GM12878 (cell line): ENCODE measurements at regions of chr19 and their contacts with region 1.

Region 1: DNA sequence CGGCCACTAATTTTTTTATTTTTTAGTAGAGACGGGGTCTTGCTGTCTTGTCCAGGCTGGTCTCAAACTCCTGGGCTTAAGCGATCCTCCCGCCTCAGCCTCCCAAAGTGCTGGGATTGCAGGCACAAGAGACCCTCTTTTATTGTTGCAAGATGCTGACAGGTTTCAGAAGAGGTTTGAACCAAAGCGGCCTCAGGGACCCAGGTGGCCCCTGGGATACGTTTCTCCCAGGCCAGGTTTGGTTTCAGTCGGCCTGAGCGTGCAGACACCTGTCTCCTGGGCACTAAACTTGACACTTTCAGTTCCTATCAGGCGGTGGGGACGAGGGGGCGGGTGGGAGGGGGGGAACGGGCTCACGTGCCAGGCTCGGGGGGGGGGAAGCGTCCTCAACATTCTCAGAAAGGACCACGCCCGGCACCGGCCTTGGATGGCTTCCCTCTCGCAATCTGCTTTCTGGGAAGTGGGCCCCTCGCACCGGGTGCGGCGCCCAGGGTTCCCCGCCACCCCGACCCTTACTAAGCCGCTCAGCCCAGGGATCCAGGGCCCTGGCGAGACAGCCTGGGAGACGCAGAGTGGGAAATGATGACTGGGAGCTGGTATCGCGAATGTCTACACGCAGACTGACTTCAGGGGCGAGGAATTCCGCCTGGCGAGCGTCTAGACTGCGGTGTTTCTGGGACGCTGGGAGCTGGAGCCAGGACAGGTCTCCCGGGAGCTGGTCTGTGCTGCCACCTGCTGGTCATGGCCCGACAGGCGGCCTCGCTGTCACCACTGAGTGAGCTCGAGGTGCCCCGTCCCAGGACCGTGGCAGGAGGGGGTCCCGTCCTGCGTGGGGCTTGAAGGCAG is 91.6 kb downstream of the GNG7 start:
- DNase-seq: peak; percentile 91
- ATAC-seq: peak; percentile 58
- H3K4me3 ChIP-seq: peak overlapping the region; percentile 72; the same call in 1 of the 2 replicates
- H3K27ac ChIP-seq: peak overlapping the region; percentile 96
- H3K4me1 ChIP-seq: peaks cover 46% of the 10 kb centered on the region
- H3K27me3 ChIP-seq: no peaks in the 10 kb centered on the region
- CTCF ChIP-seq: peak; percentile 93 to 97 (median 94); a peak in 5 of 6 replicates
- EP300 ChIP-seq: peak; percentile 68 to 90; a peak in 3 of 4 replicates
- POLR2A ChIP-seq: no peak; the same call in 1 of the 2 replicates
- RAD21 ChIP-seq: peak; percentile 91

Region 2: DNA sequence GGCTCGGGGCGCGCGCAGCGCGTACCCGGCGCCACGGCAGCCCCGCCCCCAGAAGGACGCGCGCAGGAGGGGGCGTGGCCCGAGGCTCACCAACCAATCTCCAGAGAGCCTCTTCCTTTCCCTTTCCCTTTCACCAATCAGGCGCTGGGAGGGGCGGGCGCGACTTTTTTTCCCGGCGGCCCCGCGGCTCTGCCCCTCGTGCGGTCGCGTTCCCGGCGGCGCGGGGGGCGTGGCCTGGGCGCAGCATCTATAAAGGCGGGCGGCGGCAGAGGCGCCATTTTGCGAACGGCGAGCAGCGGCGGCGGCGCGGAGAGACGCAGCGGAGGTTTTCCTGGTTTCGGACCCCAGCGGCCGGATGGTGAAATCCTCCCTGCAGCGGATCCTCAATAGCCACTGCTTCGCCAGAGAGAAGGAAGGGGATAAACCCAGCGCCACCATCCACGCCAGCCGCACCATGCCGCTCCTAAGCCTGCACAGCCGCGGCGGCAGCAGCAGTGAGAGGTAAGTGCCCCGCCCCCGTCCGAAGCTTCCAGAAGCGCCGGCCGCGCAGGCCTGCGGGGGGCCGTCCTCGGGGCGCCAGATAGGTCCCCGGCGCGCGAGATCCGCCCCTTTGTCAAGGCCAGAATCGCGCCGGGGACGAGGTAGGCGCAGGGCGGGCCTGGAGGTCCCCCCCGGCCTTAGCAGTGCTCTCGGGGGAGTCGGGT is 341.5 kb before region 1 on chr19:
- CTCF ChIA-PET with region 1: interaction called, 3 read pairs
- POLR2A ChIA-PET with region 1: no interaction called
- RAD21 ChIA-PET with region 1: interaction called, 3 read pairs
- SMC1A ChIA-PET with region 1: no interaction called
- in situ Hi-C with region 1: loop called (anchors 10 kb)
- intact Hi-C with region 1: no loop called
- DNase-seq: peak; percentile 66
- ATAC-seq: peak; percentile 61
- H3K4me3 ChIP-seq: peak overlapping the region; percentile 95
- H3K27ac ChIP-seq: peak overlapping the region; percentile 89
- H3K4me1 ChIP-seq: peaks cover 20% of the 10 kb centered on the region
- H3K27me3 ChIP-seq: no peaks in the 10 kb centered on the region
- CTCF ChIP-seq: peak; percentile 5 to 9 (median 9); a peak in 1 of 6 replicates
- EP300 ChIP-seq: no peak
- POLR2A ChIP-seq: peak; percentile 100
- RAD21 ChIP-seq: no peak

Region 3: DNA sequence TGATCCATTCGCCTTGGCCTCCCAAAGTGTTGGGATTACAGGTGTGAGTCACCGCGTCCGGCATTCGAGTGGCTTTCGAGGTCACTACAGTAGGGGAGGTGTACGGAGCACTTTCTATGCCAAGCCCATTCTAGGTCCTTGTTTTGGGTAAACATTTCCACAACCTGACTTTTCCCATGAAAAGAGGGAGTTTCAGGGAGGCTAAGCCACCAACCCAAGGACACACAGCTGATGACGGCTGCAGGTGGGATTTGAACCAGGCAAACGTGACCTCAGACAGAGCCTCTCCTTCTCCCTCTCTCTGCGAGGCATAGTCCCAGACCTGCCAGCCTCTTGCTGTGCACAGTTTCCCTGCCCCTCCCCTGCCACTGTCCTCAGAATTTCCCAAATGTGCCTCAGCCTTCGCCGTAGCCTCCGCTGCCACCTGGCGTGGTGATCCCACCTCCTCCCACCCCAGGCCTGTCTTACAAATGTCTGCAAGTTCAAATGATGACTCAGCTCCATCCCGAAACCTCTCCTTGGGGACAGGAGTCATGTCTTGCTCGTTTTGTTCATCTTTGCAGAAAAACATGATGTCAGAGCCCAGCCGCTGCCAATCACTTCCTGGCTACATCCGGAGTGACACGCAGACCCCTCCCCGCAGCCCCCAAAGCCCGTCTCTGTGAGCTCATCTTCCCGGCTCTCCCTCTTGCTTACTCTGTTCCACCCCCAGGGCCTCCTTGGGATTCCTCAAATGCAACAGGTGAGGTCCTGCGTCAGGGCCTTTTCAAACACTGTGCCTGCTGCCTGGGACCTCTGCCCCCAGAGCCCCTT is 141.6 kb before region 1 on chr19:
- CTCF ChIA-PET with region 1: interaction called, 70 read pairs
- POLR2A ChIA-PET with region 1: interaction called, 12 read pairs
- RAD21 ChIA-PET with region 1: interaction called, 23 read pairs
- SMC1A ChIA-PET with region 1: interaction called, 143 read pairs
- in situ Hi-C with region 1: loop called (anchors 5 kb)
- intact Hi-C with region 1: loop called (anchors 1 kb)
- DNase-seq: no peak
- ATAC-seq: peak; percentile 86
- H3K4me3 ChIP-seq: no peak overlapping the region
- H3K27ac ChIP-seq: no peak overlapping the region
- H3K4me1 ChIP-seq: peaks cover 8% of the 10 kb centered on the region
- H3K27me3 ChIP-seq: no peaks in the 10 kb centered on the region
- CTCF ChIP-seq: no peak
- EP300 ChIP-seq: no peak
- POLR2A ChIP-seq: no peak
- RAD21 ChIP-seq: no peak

Region 4: GRCh38 chr19:2552859-2553258 is 58.0 kb before region 1 on chr19:
- CTCF ChIA-PET with region 1: interaction called, 9 read pairs
- POLR2A ChIA-PET with region 1: interaction called, 8 read pairs
- RAD21 ChIA-PET with region 1: interaction called, 37 read pairs
- SMC1A ChIA-PET with region 1: interaction called, 18 read pairs
- in situ Hi-C with region 1: no loop called
- intact Hi-C with region 1: no loop called
- DNase-seq: peak; percentile 86
- ATAC-seq: peak; percentile 94
- H3K4me3 ChIP-seq: peak overlapping the region; percentile 20; the same call in 1 of the 2 replicates
- H3K27ac ChIP-seq: peak overlapping the region; percentile 55
- H3K4me1 ChIP-seq: peaks cover 11% of the 10 kb centered on the region
- H3K27me3 ChIP-seq: no peaks in the 10 kb centered on the region
- CTCF ChIP-seq: no peak
- EP300 ChIP-seq: peak in 1 of 2 experiments; percentile 77; a peak in 1 of 4 replicates
- POLR2A ChIP-seq: no peak
- RAD21 ChIP-seq: 0 out of 2 replicates have a peak, but pooled peaks have one; percentile 5

Region 5: GRCh38 chr19:2594319-2594718 is 16.5 kb before region 1 on chr19:
- CTCF ChIA-PET with region 1: interaction called, 121 read pairs
- POLR2A ChIA-PET with region 1: interaction called, 133 read pairs
- RAD21 ChIA-PET with region 1: interaction called, 200 read pairs
- SMC1A ChIA-PET with region 1: interaction called, 131 read pairs
- in situ Hi-C with region 1: no loop called
- intact Hi-C with region 1: loop called (anchors 1 kb)
- DNase-seq: peak; percentile 60
- ATAC-seq: peak; percentile 4; the same call in 1 of the 3 replicates
- H3K4me3 ChIP-seq: no peak overlapping the region
- H3K27ac ChIP-seq: peak overlapping the region; percentile 49
- H3K4me1 ChIP-seq: peaks cover 23% of the 10 kb centered on the region
- H3K27me3 ChIP-seq: no peaks in the 10 kb centered on the region
- CTCF ChIP-seq: no peak
- EP300 ChIP-seq: peak; percentile 53 to 66; a peak in 2 of 4 replicates
- POLR2A ChIP-seq: no peak
- RAD21 ChIP-seq: no peak